Activated T-helper 1 cell treated with anti-CD3 and anti-CD28 coated beads, Interleukin-12 subunit alpha, Interleukin-12 subunit beta, Interleukin-2, Interleukin-4 antibody, amounts not matched to agents 30 ng/mL and 10 ng/mL and 1 ng/mL, durations not matched to agents 14 hours and 24 hours and 36 hours (primary cell): ENCODE measurements at regions of chr18 and their contacts with region 1.

Region 1: GRCh38 chr18:2985628-2986027 is 27.3 kb downstream of the LPIN2 start:
- DNase-seq: no peak
- H3K4me3 Mint-ChIP-seq: no peak overlapping the region
- H3K27ac Mint-ChIP-seq: no peak overlapping the region
- H3K4me1 Mint-ChIP-seq: peaks cover 78% of the 10 kb centered on the region
- H3K27me3 Mint-ChIP-seq: no peaks in the 10 kb centered on the region

Region 2: DNA sequence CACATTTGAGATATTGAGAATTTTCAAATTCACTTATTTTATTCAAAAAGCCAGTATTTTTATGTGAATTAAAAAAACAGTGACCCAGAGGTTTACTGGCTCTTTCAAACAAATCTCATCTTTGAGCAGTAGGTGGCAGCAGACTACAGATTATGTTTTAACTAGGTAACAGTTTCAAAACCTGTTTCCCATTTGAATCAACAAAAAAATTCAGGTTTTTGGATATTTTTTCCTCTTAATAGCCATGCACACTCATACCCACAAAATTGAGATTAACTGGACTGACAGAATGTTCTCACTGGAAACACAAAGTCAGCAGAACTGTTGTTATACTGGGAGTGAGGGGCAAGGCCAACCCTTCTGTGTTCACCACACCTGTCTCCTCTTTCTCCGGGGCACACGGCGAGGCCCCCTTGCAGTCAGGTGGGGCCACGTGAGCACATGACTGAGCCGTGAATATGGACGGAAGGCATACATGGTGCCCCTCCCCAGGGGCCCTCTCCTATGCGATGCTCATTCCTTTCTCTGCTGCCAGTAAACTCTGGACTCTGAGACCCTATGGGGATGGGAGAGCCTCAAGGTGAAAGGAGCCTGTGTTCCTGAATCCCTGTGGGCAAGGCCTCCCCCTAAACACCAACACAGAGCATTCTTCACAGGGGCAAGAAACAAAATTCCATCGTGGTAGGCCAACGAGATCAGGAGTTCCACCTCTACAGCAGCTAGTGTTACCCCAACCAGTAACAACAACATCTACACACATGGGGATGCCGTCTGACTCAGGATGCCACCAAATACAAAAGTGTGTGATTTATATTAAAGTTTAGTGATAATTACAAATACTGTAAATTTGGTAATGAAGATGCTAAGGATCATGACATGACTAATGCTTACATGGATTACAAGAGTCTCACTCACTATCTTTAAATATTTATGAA is 53.1 kb before region 1 on chr18:
- intact Hi-C with region 1: loop called (anchors 1 kb)
- DNase-seq: peak; percentile 29
- H3K4me3 Mint-ChIP-seq: no peak overlapping the region
- H3K27ac Mint-ChIP-seq: peak overlapping the region; percentile 82
- H3K4me1 Mint-ChIP-seq: peaks cover 38% of the 10 kb centered on the region
- H3K27me3 Mint-ChIP-seq: no peaks in the 10 kb centered on the region